Activated B cell treated with CpG ODN at 0.5 μM for 24 hours (primary cell): ENCODE measurements at regions of chr10 and their contacts with region 1.

Region 1: DNA sequence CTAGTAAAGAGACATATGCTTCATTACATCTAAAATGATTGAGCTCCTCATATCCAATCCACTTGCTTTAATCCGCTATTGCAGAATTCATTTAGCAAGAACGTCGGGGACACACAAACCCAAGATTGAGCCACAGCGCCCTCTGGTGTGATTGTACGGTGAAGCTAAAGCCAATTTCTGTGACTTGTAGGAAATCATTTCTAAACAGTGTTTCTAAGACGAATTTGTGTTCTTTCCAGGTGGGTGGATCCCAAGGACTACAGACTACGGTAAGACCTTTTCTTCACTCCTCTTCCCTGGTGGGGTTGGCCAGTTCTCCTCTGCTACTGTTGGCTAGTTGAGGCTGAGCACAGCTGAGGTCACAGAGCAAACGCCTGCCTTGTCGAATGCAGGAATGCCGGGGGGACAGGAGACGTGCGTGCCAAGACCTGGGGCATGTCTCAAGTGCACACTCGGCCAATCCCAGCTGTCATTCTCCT is 5.2 kb downstream of the DMBT1 start:
- DNase-seq: no peak
- ATAC-seq: no peak
- H3K4me3 Mint-ChIP-seq: no peak overlapping the region
- H3K27ac Mint-ChIP-seq: no peak overlapping the region
- H3K4me1 Mint-ChIP-seq: no peaks in the 10 kb centered on the region
- H3K27me3 Mint-ChIP-seq: peaks cover 42% of the 10 kb centered on the region
- CTCF ChIP-seq: no peak

Region 2: GRCh38 chr10:122298598-122299301 is 267.0 kb before region 1 on chr10:
- CTCF ChIA-PET with region 1: interaction called, 36 read pairs
- POLR2A ChIA-PET with region 1: no interaction called
- intact Hi-C with region 1: no loop called
- DNase-seq: peak; percentile 48
- ATAC-seq: peak; percentile 89
- H3K4me3 Mint-ChIP-seq: no peak overlapping the region
- H3K27ac Mint-ChIP-seq: no peak overlapping the region
- H3K4me1 Mint-ChIP-seq: peaks cover 2% of the 10 kb centered on the region
- H3K27me3 Mint-ChIP-seq: peaks cover 13% of the 10 kb centered on the region
- CTCF ChIP-seq: no peak

Region 3: GRCh38 chr10:122342293-122343134 is 223.3 kb before region 1 on chr10:
- CTCF ChIA-PET with region 1: interaction called, 8 read pairs
- POLR2A ChIA-PET with region 1: no interaction called
- intact Hi-C with region 1: loop called (anchors 1 kb)
- DNase-seq: no peak
- ATAC-seq: peak; percentile 65
- H3K4me3 Mint-ChIP-seq: no peak overlapping the region
- H3K27ac Mint-ChIP-seq: no peak overlapping the region
- H3K4me1 Mint-ChIP-seq: peaks cover 16% of the 10 kb centered on the region
- H3K27me3 Mint-ChIP-seq: peaks cover 13% of the 10 kb centered on the region
- CTCF ChIP-seq: no peak

Region 4: DNA sequence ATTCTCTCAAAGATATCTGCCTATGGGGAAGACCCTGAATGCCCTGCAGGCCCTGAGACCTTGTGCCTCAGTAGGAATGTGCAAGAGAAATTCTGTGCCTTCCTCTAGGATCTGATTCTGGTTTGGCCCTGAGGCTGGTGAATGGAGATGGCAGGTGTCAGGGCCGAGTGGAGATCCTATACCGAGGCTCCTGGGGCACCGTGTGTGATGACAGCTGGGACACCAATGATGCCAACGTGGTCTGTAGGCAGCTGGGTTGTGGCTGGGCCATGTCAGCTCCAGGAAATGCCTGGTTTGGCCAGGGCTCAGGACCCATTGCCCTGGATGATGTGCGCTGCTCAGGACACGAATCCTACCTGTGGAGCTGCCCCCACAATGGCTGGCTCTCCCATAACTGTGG is 10.5 kb after region 1 on chr10:
- CTCF ChIA-PET with region 1: interaction called, 10 read pairs
- POLR2A ChIA-PET with region 1: no interaction called
- intact Hi-C with region 1: no loop called
- DNase-seq: no peak
- ATAC-seq: no peak
- H3K4me3 Mint-ChIP-seq: no peak overlapping the region
- H3K27ac Mint-ChIP-seq: no peak overlapping the region
- H3K4me1 Mint-ChIP-seq: no peaks in the 10 kb centered on the region
- H3K27me3 Mint-ChIP-seq: no peaks in the 10 kb centered on the region
- CTCF ChIP-seq: no peak